Common myeloid progenitor, CD34-positive (primary cell): ENCODE measurements at regions of chr1 and their contacts with region 1.

Region 1: DNA sequence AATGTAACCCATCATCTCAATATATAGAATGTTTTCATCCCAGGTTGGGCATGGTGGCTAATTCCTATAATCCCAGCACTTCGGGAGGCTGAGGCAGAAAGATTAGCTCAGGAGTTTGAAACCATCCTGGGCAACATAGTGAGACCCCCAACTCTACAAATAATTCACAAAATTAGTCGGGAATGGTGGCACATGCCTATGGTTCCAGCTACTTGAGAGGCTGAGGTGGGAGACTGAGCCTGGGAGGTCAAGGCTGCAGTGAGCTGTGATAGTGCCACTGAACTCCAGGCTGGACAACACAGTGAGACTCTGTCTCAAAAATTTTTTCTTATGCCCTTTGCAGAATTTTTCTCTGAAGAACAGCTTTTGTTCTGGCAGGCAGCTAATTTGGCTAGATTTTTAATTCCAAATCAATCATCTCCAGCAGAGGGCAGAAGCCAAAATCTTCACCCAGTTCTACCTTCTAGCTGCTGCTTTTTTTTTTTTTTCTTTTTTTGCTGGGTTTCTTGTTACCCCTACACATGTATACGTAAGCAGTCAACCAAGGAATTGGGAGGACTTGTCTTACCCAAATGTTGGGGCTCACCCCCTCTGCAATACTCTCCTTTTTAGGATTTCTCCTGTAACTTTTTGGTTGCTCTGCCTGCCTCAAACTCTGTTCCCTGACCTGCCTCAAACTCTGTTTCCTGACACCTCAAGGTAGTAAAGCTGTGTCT is 2.7 kb upstream of the RAD54L start:
- DNase-seq: peak; percentile 50 to 75 (median 68)
- H3K4me3 ChIP-seq: no peak overlapping the region
- H3K27ac ChIP-seq: no peak overlapping the region
- H3K4me1 ChIP-seq: peaks cover 10 to 28% (median 24%) of the 10 kb centered on the region in 4 experiments
- H3K27me3 ChIP-seq: no peaks in the 10 kb centered on the region

Region 2: GRCh38 chr1:46173361-46173856 is 71.4 kb before region 1 on chr1:
- CTCF ChIA-PET with region 1: no interaction called
- POLR2A ChIA-PET with region 1: interaction called, 11 read pairs
- DNase-seq: peak in 2 of 3 donors; percentile 15 to 24
- H3K4me3 ChIP-seq: no peak overlapping the region
- H3K27ac ChIP-seq: no peak overlapping the region
- H3K4me1 ChIP-seq: no peaks in the 10 kb centered on the region
- H3K27me3 ChIP-seq: peaks cover 0 to 6% (median 0%) of the 10 kb centered on the region in 5 experiments